PC-3 (cell line): ENCODE measurements at regions of chr1 and their contacts with region 1.

Region 1: DNA sequence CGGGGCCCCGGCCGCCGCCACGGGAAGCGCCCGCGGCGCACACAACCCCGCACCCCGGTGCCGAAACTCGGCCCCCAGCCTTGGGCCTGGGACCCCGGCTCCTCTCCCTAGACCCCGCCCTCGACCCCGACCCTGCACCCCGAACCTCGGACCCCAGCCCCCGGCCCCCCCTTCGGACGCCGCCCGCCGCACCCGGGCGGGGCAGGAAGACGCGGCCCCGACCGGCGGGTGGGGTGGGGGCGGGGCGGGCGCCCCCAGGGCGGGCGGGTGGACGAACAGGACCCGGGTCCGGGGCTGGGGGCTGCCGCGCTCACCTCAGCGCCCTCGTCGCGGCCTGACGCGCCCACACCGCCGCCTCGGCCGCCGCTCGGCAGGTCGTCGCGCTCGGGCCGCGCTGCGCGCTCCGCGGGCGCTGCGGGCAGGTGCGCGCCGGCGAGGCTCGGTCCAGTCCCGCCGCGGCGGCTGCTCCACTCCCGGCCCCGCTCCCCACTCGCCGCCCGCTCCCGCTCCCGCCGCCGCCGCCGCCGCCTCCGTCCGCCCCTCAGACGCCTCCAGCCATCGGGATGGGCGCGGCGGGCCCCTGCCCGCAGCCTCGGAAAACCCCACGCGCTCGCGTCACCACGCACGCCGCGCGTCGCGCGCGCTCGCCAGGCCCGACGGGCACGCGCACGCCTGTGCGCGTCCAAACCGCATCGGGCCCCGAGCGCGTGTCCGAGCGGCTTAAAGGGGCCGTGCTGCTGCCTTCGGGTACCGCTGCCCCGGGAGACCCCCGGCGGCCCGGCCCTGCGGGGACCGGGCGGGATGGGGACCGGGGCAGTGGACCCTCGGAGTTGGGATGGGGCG is at the start of gene GNB1:
- DNase-seq: peak; percentile 99
- ATAC-seq: peak; percentile 57
- H3K4me3 ChIP-seq: peak within 1 kb of the TSS; percentile 93
- H3K27ac ChIP-seq: peak within 1 kb of the TSS; percentile 33
- H3K4me1 ChIP-seq: peaks cover 45% of the 10 kb centered on the region
- H3K27me3 ChIP-seq: no peaks in the 10 kb centered on the region
- CTCF ChIP-seq: no peak
- total RNA-seq, gene GNB1: 125 and 171 TPM in 2 replicates

Region 2: DNA sequence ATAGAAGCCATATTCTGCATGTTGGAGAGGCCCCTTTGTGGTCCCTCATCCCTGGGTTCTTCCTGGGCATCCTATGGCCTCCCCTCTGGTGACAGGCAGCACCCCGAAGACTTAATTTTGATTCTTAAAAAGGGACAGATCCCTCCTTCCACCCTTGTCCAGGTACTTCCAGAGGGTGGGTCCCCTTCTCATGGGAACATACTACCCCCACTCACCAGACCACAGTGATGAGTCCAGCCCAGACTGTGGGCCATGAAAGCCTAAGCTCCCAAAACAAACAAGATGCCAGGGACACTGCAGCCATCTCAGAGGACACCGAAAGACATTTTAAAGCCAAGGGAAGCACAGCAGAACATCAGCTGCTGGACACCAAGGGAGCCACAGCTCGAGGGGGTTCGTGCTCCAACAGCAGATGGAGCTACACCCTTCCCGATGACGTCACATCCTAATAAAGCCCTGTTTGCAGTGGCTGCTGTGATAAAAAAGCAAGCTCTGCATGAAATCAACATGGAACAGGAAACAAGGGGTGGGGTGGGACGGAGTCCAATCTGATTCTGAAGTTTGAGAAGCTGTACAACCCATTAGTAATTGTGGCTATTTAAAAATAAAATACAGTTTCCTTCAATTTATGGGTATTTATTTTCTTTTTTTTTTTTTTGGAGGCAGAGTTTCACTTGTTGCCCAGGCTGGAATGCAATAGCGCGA is 32.2 kb before region 1 on chr1:
- CTCF ChIA-PET with region 1: interaction called, 3 read pairs
- POLR2A ChIA-PET with region 1: no interaction called
- intact Hi-C with region 1: loop called (anchors 2 kb)
- DNase-seq: peak; percentile 76
- ATAC-seq: peak; percentile 48
- H3K4me3 ChIP-seq: peak overlapping the region; percentile 12; the same call in 1 of the 2 replicates
- H3K27ac ChIP-seq: peak overlapping the region; percentile 72
- H3K4me1 ChIP-seq: peaks cover 33% of the 10 kb centered on the region
- H3K27me3 ChIP-seq: no peaks in the 10 kb centered on the region
- CTCF ChIP-seq: peak; percentile 71

Region 3: DNA sequence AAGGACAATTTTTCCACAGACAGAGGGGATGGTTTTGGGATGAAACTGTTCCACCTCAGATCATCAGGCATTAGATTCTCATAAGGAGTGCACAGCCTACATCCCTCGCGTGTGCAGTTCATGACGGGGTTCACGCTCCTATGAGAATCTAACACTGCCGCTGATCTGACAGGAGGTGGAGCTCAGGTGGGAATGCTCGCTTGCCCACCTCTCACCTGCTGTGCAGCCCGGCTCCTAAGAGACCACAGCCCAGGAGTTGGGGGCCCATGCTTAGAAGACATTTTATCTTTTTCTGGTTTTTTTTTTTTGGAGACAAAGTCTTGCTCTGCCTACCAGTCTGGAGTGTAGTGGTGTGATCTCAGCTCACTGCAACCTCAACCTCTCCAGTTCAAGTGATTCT is 15.8 kb before region 1 on chr1:
- CTCF ChIA-PET with region 1: no interaction called
- POLR2A ChIA-PET with region 1: interaction called, 11 read pairs
- intact Hi-C with region 1: no loop called
- DNase-seq: no peak
- ATAC-seq: no peak
- H3K4me3 ChIP-seq: no peak overlapping the region
- H3K27ac ChIP-seq: no peak overlapping the region
- H3K4me1 ChIP-seq: no peaks in the 10 kb centered on the region
- H3K27me3 ChIP-seq: no peaks in the 10 kb centered on the region
- CTCF ChIP-seq: no peak

Region 4: DNA sequence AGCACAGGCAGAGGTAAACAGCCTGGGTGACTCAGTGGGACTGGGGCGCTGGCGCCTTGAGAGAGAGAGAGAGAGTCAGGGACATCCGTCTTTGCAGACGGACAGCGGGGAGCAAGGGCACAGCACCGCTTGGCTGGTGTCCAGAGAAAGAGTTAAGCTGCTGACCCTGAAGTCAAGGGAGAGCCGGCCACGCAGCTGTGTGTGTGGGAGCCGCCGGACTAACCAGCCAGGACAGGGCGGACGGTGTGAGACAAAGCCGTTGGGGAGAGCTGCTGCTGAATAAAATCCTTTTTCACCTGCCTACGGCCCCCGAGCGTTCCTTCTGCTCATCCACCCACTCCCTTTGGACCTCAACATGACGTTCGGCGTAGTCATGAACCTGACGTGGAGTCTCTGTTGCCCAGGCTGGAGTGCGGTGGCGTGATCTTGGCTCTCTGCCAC is 98.4 kb after region 1 on chr1:
- CTCF ChIA-PET with region 1: no interaction called
- POLR2A ChIA-PET with region 1: no interaction called
- intact Hi-C with region 1: no loop called
- DNase-seq: no peak
- ATAC-seq: no peak
- H3K4me3 ChIP-seq: no peak overlapping the region
- H3K27ac ChIP-seq: no peak overlapping the region
- H3K4me1 ChIP-seq: no peaks in the 10 kb centered on the region
- H3K27me3 ChIP-seq: no peaks in the 10 kb centered on the region
- CTCF ChIP-seq: no peak

Region 5: DNA sequence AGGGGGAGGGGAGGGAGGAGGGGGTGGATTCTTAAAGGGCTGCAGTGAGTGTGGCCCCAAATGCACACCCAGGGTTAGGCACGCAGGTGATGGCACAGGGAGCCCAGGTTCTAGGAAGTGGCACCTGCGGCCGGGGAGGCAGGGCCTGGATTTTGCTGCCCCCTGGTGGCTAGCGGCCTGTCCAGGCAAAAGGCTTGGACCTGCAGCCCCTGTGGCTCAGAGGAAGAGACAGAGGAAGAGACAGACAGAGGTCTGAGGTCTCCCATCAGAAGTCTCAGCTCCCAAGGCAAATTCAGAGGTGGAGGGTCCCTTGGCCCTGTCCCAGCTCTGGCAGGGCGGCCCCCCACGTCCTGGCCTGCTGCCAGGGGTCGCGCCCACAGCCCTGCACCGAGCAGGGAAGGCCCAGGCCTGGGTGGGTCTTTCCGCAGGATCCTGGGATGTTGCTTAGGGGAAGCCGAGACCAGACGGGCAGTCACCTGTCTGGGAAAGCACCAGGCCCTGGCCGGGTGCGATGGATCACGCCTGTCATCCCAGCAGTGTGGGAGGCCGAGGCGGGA is 657.4 kb after region 1 on chr1:
- CTCF ChIA-PET with region 1: no interaction called
- POLR2A ChIA-PET with region 1: no interaction called
- intact Hi-C with region 1: no loop called
- DNase-seq: peak; percentile 92
- ATAC-seq: peak; percentile 41
- H3K4me3 ChIP-seq: peak overlapping the region; percentile 69
- H3K27ac ChIP-seq: no peak overlapping the region
- H3K4me1 ChIP-seq: peaks cover 22% of the 10 kb centered on the region
- H3K27me3 ChIP-seq: no peaks in the 10 kb centered on the region
- CTCF ChIP-seq: peak; percentile 98